CD4-positive, alpha-beta memory T cell (primary cell): ENCODE measurements at regions of chr13 and their contacts with region 1.

Region 1: GRCh38 chr13:57982782-57983181 is 351.2 kb downstream of the PCDH17 start:
- DNase-seq: no peak
- H3K4me3 ChIP-seq: no peak overlapping the region
- H3K4me3 Mint-ChIP-seq: no peak overlapping the region
- H3K27ac ChIP-seq: no peak overlapping the region
- H3K27ac Mint-ChIP-seq: no peak overlapping the region
- H3K4me1 ChIP-seq: no peaks in the 10 kb centered on the region
- H3K4me1 Mint-ChIP-seq: no peaks in the 10 kb centered on the region
- H3K27me3 ChIP-seq: no peaks in the 10 kb centered on the region
- H3K27me3 Mint-ChIP-seq: no peaks in the 10 kb centered on the region

Region 2: GRCh38 chr13:57582032-57582431 is 400.8 kb before region 1 on chr13:
- CTCF ChIA-PET with region 1: no interaction called
- POLR2A ChIA-PET with region 1: no interaction called
- intact Hi-C with region 1: no loop called
- DNase-seq: no peak
- H3K4me3 ChIP-seq: no peak overlapping the region
- H3K4me3 Mint-ChIP-seq: no peak overlapping the region
- H3K27ac ChIP-seq: no peak overlapping the region
- H3K27ac Mint-ChIP-seq: no peak overlapping the region
- H3K4me1 ChIP-seq: no peaks in the 10 kb centered on the region
- H3K4me1 Mint-ChIP-seq: no peaks in the 10 kb centered on the region
- H3K27me3 ChIP-seq: no peaks in the 10 kb centered on the region
- H3K27me3 Mint-ChIP-seq: no peaks in the 10 kb centered on the region

Region 3: GRCh38 chr13:58004751-58005150 is 22.0 kb after region 1 on chr13:
- CTCF ChIA-PET with region 1: no interaction called
- POLR2A ChIA-PET with region 1: no interaction called
- intact Hi-C with region 1: loop called (anchors 1 kb)
- DNase-seq: no peak
- H3K4me3 ChIP-seq: no peak overlapping the region
- H3K4me3 Mint-ChIP-seq: no peak overlapping the region
- H3K27ac ChIP-seq: no peak overlapping the region
- H3K27ac Mint-ChIP-seq: no peak overlapping the region
- H3K4me1 ChIP-seq: no peaks in the 10 kb centered on the region
- H3K4me1 Mint-ChIP-seq: no peaks in the 10 kb centered on the region
- H3K27me3 ChIP-seq: no peaks in the 10 kb centered on the region
- H3K27me3 Mint-ChIP-seq: no peaks in the 10 kb centered on the region